Activated CD4-positive, alpha-beta T cell treated with anti-CD3 and anti-CD28 coated beads for 36 hours (primary cell): ENCODE measurements at regions of chr3 and their contacts with region 1.

Region 1: GRCh38 chr3:156674046-156674910 is at the start of gene TIPARP:
- DNase-seq: peak; percentile 99
- ATAC-seq: peak; percentile 86
- H3K4me3 Mint-ChIP-seq: peak within 1 kb of the TSS; percentile 77
- H3K27ac Mint-ChIP-seq: peak within 1 kb of the TSS; percentile 89
- H3K4me1 Mint-ChIP-seq: peaks cover 32% of the 10 kb centered on the region
- H3K27me3 Mint-ChIP-seq: no peaks in the 10 kb centered on the region
- total RNA-seq, gene TIPARP: 18.5 to 23.5 TPM

Region 2: DNA sequence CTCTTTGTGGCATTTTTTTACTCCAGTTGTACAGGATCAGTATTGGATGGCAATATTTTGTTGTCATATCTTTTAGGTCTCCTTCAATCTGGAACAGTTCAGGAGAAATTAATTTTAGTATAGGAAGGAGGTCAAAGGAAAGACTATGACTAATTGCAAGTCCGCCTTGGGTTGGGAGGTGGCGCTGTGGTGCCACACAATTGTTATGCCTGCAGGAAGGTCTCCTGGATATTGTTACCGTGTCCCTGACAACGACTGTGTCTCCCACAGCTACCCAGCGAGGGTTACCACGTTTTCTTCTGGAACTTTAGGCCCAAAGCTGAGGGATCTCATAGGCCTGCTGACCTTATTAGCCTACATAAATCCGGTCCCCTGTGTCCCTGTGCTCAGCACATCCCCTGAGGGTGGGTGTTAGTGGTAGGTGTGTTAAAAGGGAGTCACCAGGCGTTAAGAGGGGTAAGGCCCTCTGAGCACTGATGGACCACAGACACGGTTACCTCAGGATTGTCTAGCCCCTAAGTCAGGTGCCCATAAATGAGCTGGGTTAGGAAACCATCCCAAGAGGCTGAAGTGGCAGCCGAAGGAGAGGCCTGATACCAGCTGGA is 522.4 kb before region 1 on chr3:
- CTCF ChIA-PET with region 1: interaction called, 3 read pairs
- POLR2A ChIA-PET with region 1: no interaction called
- intact Hi-C with region 1: loop called in 1 of 2 experiments (anchors 10 kb)
- DNase-seq: peak; percentile 77
- ATAC-seq: peak; percentile 78
- H3K4me3 Mint-ChIP-seq: no peak overlapping the region
- H3K27ac Mint-ChIP-seq: no peak overlapping the region
- H3K4me1 Mint-ChIP-seq: no peaks in the 10 kb centered on the region
- H3K27me3 Mint-ChIP-seq: no peaks in the 10 kb centered on the region

Region 3: GRCh38 chr3:156602424-156602823 is 71.9 kb before region 1 on chr3:
- CTCF ChIA-PET with region 1: interaction called, 5 read pairs
- POLR2A ChIA-PET with region 1: no interaction called
- intact Hi-C with region 1: loop called in 1 of 2 experiments (anchors 5 kb)
- DNase-seq: no peak
- ATAC-seq: peak; percentile 93
- H3K4me3 Mint-ChIP-seq: no peak overlapping the region
- H3K27ac Mint-ChIP-seq: no peak overlapping the region
- H3K4me1 Mint-ChIP-seq: peaks cover 18% of the 10 kb centered on the region
- H3K27me3 Mint-ChIP-seq: peaks cover 12% of the 10 kb centered on the region

Region 4: GRCh38 chr3:156826144-156826895 is 152.0 kb after region 1 on chr3 and contains the start of gene LEKR1:
- CTCF ChIA-PET with region 1: no interaction called
- POLR2A ChIA-PET with region 1: no interaction called
- intact Hi-C with region 1: loop called in 1 of 2 experiments (anchors 2 kb)
- DNase-seq: peak; percentile 76
- ATAC-seq: peak; percentile 77
- H3K4me3 Mint-ChIP-seq: peak within 1 kb of the TSS; percentile 82
- H3K27ac Mint-ChIP-seq: peak within 1 kb of the TSS; percentile 95
- H3K4me1 Mint-ChIP-seq: peaks cover 17% of the 10 kb centered on the region
- H3K27me3 Mint-ChIP-seq: no peaks in the 10 kb centered on the region
- total RNA-seq, gene LEKR1: 0.37 to 0.53 TPM

Region 5: DNA sequence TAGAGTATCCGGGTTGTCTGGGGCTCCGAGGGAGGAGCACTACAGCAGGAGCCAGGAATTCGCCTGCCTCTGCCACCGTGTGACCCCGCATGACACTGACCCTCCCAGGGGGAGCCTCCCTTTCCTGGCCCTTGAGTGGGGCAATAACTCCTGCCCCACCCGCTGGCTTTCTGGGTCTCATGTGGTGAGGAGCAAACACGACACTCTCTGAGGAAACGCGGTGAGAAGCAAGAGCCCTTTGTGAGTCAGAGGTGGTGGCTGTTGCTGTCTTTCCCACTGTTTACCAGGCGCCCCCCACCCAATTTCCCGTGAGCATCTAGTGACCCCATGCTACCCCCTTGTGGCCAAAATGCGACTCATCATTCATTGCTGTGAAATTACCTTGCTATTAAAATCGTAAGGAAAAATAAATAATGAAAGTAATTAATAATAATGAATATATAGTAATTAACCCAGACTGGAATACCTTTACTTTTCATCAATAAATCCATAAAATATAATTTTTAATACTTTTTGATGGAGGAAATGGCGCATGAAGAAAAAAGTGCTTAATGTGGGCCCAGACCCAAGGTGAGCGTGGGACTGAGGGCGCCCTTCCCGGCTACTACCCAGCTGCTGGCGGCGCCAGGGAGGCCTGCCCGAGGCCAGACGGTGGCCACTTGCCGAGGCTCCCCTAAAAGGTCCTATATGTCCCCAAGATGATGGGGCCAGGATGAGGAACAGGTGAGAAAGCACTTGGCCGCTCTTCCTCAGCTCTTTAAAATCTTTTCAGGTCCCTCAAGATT is 456.4 kb after region 1 on chr3:
- CTCF ChIA-PET with region 1: interaction called, 3 read pairs
- POLR2A ChIA-PET with region 1: no interaction called
- intact Hi-C with region 1: loop called (anchors 1 to 2 kb)
- DNase-seq: peak; percentile 86
- ATAC-seq: peak; percentile 19
- H3K4me3 Mint-ChIP-seq: peak overlapping the region; percentile 57
- H3K27ac Mint-ChIP-seq: peak overlapping the region; percentile 95
- H3K4me1 Mint-ChIP-seq: peaks cover 76% of the 10 kb centered on the region
- H3K27me3 Mint-ChIP-seq: no peaks in the 10 kb centered on the region

Region 6: GRCh38 chr3:157174649-157175498 is 500.6 kb after region 1 on chr3:
- CTCF ChIA-PET with region 1: no interaction called
- POLR2A ChIA-PET with region 1: no interaction called
- intact Hi-C with region 1: loop called (anchors 1 to 2 kb)
- DNase-seq: peak; percentile 99
- ATAC-seq: peak; percentile 95
- H3K4me3 Mint-ChIP-seq: peak overlapping the region; percentile 94
- H3K27ac Mint-ChIP-seq: peak overlapping the region; percentile 99
- H3K4me1 Mint-ChIP-seq: peaks cover 20% of the 10 kb centered on the region
- H3K27me3 Mint-ChIP-seq: no peaks in the 10 kb centered on the region